ENCODE measurements at regions of chr17 and their contacts with region 1.

Region 1: GRCh38 chr17:3535253-3535995 is 22.2 kb downstream of the TRPV3 start:
- DNase-seq: no peak
- H3K4me3 ChIP-seq: peak overlapping the region; percentile 47
- H3K27ac ChIP-seq: no peak overlapping the region
- H3K27me3 ChIP-seq: peaks cover 3% of the 10 kb centered on the region
- CTCF ChIP-seq: peak; percentile 64

Region 2: DNA sequence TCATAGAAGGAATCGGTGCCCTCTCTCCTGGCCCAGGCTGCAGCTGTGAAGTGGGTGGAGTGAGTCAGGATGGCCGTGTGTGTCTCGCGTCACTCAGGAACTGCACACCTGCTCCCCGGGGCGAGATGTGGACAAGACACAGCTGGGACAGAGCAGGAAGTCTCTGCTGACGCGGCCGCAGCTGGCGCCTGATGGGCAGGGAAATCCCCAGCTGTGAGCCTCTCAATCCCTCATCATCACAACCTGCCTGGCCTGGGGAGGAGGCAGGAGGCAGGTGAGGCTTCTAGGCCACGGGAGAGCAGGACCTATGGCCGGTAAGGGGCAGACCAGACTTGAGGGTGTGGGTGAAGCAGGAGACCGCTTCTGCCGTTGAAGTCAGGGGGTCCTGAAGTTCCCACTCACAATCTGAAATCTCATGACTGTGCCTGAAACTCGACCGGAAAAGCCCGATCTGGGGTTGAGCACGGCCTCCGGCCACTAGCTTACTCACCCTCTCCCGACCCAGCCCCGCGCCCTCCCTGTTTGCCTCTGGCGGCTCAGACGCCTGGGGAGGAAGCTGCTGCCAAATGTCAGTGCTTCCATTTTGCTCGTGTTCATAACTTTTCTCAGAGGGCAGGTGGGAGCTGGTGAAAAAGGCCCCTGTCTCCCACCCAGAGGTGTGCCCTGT is 23.3 kb after region 1 on chr17:
- CTCF ChIA-PET with region 1: interaction called, 10 read pairs
- POLR2A ChIA-PET with region 1: no interaction called
- DNase-seq: peak; percentile 59
- H3K4me3 ChIP-seq: no peak overlapping the region
- H3K27ac ChIP-seq: peak overlapping the region; percentile 61
- H3K27me3 ChIP-seq: peaks cover 5% of the 10 kb centered on the region
- CTCF ChIP-seq: no peak

Region 3: DNA sequence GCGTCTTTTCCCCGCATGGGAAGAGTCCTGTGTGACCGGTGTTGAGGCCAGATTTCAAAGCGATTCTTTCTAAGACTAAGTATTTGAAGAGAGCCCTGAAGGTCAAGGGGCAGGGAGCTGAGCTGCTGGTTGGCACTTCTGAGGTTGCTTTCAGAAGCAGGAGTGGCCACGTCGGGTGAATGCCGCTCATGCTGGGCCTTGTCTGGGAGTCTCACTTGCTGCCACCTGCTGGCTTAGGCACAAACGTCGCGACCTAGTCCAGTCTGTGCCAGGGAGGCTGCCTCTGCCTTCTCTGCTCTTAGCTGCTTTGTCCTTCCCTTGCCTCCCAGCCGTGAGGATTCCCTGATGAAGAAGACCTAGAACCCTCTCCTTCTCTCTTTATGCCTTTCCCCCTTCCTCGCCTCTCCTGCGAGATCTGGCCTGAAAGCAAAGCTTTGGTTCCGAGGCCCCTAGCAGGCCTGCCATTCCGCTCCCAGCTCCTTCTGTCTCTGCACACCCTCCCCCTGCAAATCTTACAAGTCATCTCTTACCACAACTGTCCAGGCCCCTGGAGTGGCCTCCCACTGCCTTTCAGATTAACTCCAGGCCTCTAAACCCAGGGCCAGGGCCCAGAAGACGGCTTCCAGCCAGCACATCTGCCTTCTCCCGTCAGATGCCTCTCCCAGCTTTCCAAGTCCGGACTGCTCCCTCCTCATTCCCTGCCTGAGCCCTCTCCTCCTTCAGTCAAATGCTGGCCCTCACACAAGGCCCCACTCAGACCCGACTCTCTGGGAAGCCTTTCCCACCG is 112.5 kb after region 1 on chr17:
- CTCF ChIA-PET with region 1: interaction called, 13 read pairs
- POLR2A ChIA-PET with region 1: no interaction called
- DNase-seq: no peak
- H3K4me3 ChIP-seq: no peak overlapping the region
- H3K27ac ChIP-seq: no peak overlapping the region
- H3K27me3 ChIP-seq: no peaks in the 10 kb centered on the region
- CTCF ChIP-seq: peak; percentile 61

Measured in AG04450 (cell line).